Activated CD8-positive, alpha-beta T cell treated with anti-CD3 and anti-CD28 coated beads for 36 hours (primary cell): ENCODE measurements at regions of chr7 and their contacts with region 1.

Region 1: DNA sequence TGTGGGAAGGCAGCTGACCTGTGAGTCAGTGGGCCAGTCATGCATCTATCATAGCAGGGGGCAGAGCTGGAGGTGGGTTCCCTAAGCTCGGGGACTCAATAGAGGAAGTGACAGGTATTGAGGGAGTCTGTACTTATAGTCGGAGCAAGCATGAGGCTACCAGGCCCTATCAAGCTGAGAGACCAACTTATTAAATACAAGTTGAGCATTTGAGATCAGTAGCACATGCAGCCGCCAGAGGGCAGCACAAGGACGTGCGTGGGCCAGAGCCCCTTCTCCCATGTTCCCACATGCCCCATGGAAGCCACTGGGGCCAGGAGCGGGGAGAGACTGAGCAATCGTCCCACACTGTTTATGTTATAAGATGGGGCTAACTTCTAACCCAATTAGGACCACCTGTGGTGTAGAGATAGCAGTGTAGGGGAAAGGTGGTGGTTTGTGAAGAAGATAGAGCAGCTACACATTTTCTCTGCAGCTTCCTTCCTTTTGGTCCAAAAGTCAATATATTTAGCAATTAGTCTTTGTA is 13.0 kb upstream of the STK31 start:
- DNase-seq: peak; percentile 76
- ATAC-seq: peak; percentile 45
- H3K4me3 Mint-ChIP-seq: no peak overlapping the region
- H3K27ac Mint-ChIP-seq: no peak overlapping the region
- H3K4me1 Mint-ChIP-seq: no peaks in the 10 kb centered on the region
- H3K27me3 Mint-ChIP-seq: no peaks in the 10 kb centered on the region
- CTCF ChIP-seq: peak; percentile 63

Region 2: DNA sequence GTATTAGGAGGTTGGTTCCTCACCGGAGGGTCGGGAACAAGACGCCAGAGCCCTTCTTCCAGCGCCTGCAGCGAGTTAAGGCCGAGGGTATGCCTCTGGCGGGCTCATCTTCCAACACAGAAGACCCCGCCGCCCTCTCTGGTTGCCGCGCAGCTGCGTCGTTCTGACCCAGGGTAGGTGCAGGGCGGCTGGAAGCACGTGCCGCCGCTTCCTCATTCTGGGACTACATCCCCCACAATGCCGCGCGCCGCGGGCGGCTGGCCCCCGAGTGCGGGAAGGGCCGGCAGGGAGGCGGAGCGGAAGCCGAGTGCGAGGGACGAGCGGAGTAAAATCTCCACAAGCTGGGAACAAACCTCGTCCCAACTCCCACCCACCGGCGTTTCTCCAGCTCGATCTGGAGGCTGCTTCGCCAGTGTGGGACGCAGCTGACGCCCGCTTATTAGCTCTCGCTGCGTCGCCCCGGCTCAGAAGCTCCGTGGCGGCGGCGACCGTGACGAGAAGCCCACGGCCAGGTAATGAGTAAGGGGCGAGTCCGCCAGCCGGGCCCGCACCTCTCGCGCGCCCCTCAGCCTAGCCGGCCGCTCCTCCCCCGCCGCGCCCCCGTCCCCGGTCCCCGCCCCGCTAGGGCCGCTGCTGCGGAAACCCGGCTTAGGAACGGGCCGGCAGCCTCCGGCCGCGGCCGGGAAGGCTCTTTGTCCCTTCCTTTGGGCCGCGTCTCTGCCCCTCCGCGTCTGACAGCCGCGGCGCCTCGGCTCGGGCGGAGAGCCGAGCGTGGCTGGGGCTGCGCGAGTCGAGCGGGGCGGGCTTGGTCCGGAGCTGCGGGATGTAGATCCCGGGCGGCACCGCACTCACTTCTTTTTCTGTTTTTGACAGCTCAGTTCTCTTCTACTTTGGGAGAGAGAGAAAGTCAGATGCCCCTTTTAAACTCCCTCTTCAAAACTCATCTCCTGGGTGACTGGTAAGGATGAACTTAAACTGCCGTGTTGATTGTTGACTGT is 99.6 kb before region 1 on chr7 and contains the start of gene CCDC126:
- CTCF ChIA-PET with region 1: interaction called, 10 read pairs
- POLR2A ChIA-PET with region 1: no interaction called
- intact Hi-C with region 1: no loop called
- DNase-seq: peak; percentile 87
- ATAC-seq: peak; percentile 78
- H3K4me3 Mint-ChIP-seq: peak within 1 kb of the TSS; percentile 83
- H3K27ac Mint-ChIP-seq: peak within 1 kb of the TSS; percentile 61
- H3K4me1 Mint-ChIP-seq: peaks cover 64% of the 10 kb centered on the region
- H3K27me3 Mint-ChIP-seq: peaks cover 2% of the 10 kb centered on the region
- CTCF ChIP-seq: no peak
- total RNA-seq, gene CCDC126: 5.5 to 6.5 TPM

Region 3: DNA sequence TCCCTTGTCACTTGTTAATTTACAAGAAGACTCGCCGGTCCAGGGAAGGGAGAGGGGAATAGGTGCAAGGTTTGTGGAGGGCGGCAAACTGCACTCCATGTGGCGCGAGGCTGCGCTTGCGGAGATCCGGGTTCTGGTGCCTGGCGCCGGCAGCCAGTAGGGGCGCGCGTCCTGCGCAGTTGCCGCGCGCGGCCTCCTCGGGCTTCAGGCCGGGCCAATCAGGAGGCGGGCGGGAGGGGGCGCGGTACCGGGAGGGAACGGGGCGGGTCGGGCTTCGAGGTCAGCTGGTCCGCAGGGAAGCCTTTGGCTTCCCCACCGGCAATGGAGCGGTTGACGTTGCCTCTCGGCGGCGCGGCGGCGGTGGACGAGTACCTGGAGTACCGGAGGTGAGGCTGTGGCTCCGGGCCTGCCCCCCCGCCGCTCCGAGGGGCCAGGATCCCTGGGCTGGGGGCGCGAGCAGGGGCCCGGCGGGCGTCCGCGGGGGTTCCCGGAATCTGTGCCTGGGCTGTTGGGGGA is 17.0 kb before region 1 on chr7 and contains the start of gene FAM221A:
- CTCF ChIA-PET with region 1: interaction called, 84 read pairs
- POLR2A ChIA-PET with region 1: no interaction called
- intact Hi-C with region 1: no loop called
- DNase-seq: peak; percentile 89
- ATAC-seq: peak; percentile 97
- H3K4me3 Mint-ChIP-seq: peak within 1 kb of the TSS; percentile 85
- H3K27ac Mint-ChIP-seq: peak within 1 kb of the TSS; percentile 75
- H3K4me1 Mint-ChIP-seq: peaks cover 16% of the 10 kb centered on the region
- H3K27me3 Mint-ChIP-seq: peaks cover under 1% of the 10 kb centered on the region
- CTCF ChIP-seq: peak; percentile 58
- total RNA-seq, gene FAM221A: 7.5 to 7.7 TPM

Region 4: DNA sequence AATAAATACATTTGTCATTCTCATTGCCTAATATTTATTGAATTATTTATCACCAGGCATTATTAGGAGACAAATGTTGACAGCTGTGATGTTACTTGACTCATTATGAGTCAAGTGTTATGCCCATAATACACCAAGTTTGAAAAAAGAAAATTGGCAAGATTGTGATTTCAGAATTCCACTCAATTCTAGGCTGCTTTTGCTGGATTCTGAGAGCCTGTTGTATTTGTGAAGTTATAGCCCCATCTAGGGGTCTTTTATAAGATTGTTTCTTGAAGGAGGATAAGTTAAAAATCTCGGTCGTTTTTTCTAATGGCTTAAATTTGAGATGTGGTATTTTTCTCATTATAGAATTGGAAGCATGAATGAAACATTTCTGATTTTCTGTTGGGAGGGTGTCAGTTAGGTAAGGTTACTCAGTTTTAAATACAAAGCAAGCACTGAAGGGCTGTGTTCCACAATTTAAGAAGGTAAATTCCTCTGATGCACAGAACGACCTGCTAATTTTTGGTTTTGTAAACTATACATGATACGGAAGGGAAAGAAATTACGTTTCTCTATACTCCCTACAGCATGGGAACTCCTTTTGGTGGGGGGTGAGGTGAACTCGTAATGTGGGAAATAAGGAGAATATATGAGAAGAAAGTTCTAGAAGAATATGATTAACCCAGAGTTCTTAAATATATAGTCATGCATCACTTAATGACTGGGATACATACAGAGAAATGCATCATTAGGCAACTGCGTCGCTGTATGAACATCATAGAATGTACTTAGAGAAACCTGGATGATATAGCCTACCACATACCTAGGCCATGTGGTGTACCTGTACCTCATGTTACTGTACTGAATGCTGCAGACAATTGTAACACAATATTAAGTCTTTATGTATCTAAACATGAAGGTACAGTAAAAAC is 15.6 kb after region 1 on chr7:
- CTCF ChIA-PET with region 1: interaction called, 25 read pairs
- POLR2A ChIA-PET with region 1: no interaction called
- intact Hi-C with region 1: no loop called
- DNase-seq: no peak
- ATAC-seq: no peak
- H3K4me3 Mint-ChIP-seq: no peak overlapping the region
- H3K27ac Mint-ChIP-seq: no peak overlapping the region
- H3K4me1 Mint-ChIP-seq: no peaks in the 10 kb centered on the region
- H3K27me3 Mint-ChIP-seq: no peaks in the 10 kb centered on the region
- CTCF ChIP-seq: peak; percentile 84